ENCODE measurements at regions of chr5 and their contacts with region 1.

Region 1: DNA sequence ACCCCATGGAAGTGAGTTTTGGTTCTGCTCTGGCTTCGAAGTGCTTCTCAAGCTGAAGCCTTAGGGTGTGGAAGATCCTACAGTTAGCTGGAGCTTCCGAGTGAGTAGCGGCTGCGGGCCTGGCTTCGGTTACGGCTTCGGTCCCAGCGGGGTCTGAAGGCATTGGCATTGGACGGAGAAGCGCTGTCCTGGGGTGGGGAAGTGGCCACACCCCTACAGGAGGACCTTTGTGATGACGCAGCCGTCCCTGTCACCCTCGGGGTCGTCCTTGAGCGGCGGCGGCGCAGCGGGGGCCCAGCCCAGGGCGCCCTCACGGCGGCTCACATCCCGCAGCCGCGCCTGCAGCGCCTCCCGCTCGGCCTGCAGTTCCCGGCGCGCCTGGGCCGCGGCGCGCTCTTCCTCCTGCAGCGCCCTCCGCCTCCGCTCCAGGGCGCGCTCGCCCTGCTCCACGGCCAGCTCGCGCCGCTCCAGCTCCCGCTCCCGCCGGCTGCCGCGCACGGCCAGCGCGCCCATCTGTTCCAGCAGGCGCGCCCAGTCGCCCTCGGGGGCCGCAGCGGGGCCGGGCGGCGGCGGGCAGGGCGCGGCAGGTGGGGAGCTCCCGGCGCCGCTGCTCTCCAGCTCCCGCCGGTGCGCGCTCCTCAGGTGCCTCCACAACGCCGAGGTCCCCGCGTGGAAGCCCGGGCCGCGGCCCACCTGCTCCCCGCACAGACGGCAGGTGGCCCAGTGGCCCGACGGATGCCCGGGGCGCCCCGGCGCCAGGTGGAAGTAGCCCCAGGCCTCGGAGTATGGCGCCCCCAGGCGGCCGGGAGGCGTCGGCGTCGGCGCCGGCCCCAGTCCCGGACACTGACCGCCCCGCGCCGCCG is 9.9 kb downstream of the ZBED3 start:
- DNase-seq: peak; percentile 49 to 82 (median 58)
- H3K4me3 ChIP-seq: peak overlapping the region; percentile 29 to 73 (median 58)
- H3K27ac ChIP-seq: peak overlapping the region in 58 of 59 donors; percentile 64 to 92 (median 85)
- H3K27me3 ChIP-seq: no peaks in the 10 kb centered on the region
- CTCF ChIP-seq: peak in 55 of 56 donors; percentile 41 to 90 (median 66)

Region 2: GRCh38 chr5:76867827-76868693 is 209.1 kb before region 1 on chr5:
- intact Hi-C with region 1: loop called in 1 of 2 experiments (anchors 5 kb)
- DNase-seq: peak in 8 of 10 donors; percentile 9 to 79 (median 43)
- H3K4me3 ChIP-seq: peak overlapping the region in 5 of 59 donors; percentile 15 to 38 (median 22)
- H3K27ac ChIP-seq: no peak overlapping the region
- H3K27me3 ChIP-seq: no peaks in the 10 kb centered on the region
- CTCF ChIP-seq: peak; percentile 61 to 95 (median 82)

Region 3: GRCh38 chr5:77030097-77031071 is 46.8 kb before region 1 on chr5 and contains the start of gene AGGF1:
- intact Hi-C with region 1: loop called (anchors 5 kb)
- DNase-seq: peak; percentile 77 to 96 (median 93)
- H3K4me3 ChIP-seq: peak within 1 kb of the TSS; percentile 62 to 100 (median 93)
- H3K27ac ChIP-seq: peak within 1 kb of the TSS; percentile 49 to 95 (median 87)
- H3K27me3 ChIP-seq: no peaks in the 10 kb centered on the region
- CTCF ChIP-seq: peak in 32 of 56 donors; percentile 5 to 56 (median 28)
- total RNA-seq, gene AGGF1: 23.6 to 41.9 (median 31.2) TPM

Region 4: DNA sequence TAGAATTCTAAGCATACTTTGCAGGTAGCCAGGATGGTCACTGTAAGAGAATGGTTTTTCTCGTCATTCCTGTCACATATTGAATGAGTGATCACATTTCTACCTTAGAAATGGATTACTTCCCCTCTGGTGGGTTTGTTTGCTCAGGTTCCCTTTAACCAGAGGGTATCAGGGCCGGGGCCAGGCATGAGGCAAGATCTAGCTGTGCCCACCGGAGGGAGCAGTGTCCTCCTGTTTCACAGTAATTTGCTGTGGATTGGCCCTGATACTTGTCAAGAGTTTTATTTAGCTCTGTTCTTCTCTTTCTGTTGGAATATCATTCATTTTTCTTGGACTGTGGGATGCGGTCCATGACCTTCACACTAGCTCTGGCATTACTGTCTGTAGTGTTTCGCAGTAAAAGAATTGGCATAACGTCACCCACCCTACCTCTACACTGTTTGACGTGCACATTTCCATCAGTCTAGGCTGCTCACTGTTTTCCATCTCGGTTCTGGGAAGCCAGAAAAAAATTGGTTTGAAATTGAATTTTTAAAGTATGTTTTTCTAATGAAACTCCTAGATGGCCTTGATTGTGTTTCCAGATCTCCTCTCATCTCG is 52.3 kb after region 1 on chr5:
- intact Hi-C with region 1: loop called in 1 of 2 experiments (anchors 2 kb)
- DNase-seq: peak in 6 of 10 donors; percentile 33 to 55 (median 44)
- H3K4me3 ChIP-seq: no peak overlapping the region
- H3K27ac ChIP-seq: peak overlapping the region in 16 of 59 donors; percentile 2 to 58 (median 22)
- H3K27me3 ChIP-seq: no peaks in the 10 kb centered on the region
- CTCF ChIP-seq: peak in 53 of 56 donors; percentile 9 to 69 (median 38)

Region 5: DNA sequence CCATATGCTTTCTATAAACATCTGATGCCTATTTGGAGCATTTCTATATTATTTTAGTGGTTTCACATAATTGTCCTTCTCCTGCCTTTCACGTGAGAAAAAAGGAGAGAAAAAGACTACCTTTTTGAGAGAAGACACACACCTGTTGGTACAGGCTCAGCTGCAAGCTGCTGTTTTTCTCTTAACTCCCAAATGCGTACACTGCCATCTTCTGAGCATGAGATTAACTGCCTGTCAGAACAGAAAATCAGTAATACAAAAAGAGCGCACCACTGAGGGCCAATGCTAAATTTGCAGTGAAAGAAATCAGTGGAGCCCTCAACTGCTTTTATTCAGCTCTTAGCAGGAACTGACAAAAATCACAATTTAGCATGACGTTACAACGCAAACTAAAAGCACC is 360.0 kb after region 1 on chr5:
- intact Hi-C with region 1: loop called (anchors 5 kb)
- DNase-seq: peak in 1 of 10 donors; percentile 15
- H3K4me3 ChIP-seq: no peak overlapping the region
- H3K27ac ChIP-seq: peak overlapping the region in 39 of 59 donors; percentile 3 to 72 (median 32)
- H3K27me3 ChIP-seq: no peaks in the 10 kb centered on the region
- CTCF ChIP-seq: peak in 55 of 56 donors; percentile 10 to 72 (median 53)

Region 6: DNA sequence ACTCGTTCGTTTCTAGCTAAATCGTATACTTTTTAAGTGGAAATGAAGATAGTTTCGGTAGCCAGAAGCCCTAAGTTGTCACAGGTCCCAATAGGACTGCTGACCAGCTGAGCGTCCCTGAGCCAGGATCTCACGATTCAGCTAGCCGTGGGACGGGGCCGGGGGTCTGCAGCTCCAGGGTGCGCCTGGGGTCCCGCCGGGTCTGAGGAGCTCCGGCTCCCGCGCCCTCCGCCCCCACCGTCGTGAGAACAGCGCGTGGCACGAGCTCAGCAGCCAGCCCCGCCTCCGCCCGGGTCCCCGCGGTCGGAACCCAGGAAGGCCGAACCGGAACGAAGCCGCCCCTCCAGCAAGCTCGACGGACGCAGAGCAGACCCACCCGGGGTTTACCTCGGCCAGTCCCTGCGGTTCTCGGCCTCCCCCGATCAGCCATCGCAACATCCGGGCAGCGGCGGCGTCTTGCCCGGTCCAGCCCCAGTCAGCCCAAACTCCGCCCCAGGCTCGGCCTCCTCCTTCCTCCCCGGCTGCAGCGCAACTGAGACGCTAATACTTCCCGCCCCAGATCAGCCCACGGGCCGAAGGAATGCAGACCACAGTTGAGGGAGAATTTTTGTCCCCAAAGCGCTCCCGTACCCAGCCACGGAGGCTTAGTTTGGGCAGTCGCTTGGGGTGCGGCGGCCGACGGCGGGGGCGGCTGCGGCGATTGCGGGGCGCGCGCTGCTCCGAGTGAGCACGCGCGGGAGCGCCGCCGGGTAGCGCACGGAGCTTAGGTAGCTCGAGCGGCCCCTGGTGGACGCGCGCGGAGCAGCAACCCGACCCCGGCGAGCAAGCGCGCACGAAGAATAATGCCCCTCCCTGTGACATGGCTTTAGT is 414.8 kb after region 1 on chr5 and contains the start of gene WDR41:
- intact Hi-C with region 1: loop called in 1 of 2 experiments (anchors 1 kb)
- DNase-seq: peak; percentile 80 to 89 (median 84)
- H3K4me3 ChIP-seq: peak within 1 kb of the TSS; percentile 67 to 95 (median 87)
- H3K27ac ChIP-seq: peak within 1 kb of the TSS; percentile 75 to 98 (median 94)
- H3K27me3 ChIP-seq: no peaks in the 10 kb centered on the region
- CTCF ChIP-seq: peak; percentile 86 to 100 (median 96)
- total RNA-seq, gene WDR41: 43.7 to 80.4 (median 60.8) TPM